ENCODE measurements at regions of chr6 and their contacts with region 1.

Region 1: DNA sequence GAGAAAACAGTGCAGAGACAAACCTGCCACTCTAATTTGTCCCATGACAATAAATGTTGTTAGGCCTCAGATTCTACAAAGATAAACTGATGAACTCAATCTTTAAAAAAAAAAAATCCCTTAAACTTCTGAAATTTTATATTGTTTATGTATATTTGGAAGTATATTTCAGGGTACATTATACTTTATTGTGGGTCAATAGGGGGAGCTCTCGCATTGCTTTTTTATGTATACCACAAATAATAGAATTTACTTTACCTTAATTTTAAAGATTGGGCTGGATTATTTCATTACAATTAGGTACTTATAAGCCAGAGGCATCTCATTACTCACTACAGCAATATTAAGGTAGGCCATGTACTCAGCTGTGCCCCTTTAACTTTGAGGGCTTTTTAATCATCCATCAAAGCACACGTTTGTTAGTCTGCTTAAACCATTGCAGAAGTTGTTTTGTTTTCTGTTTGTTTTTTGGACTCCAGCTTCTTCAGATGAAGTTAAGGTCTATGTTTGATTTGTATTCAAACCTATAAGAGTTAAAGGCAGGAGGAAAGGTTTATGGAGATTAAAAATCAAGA is 56.3 kb upstream of the EYA4 start:
- DNase-seq: no peak
- ATAC-seq: no peak

Region 2: DNA sequence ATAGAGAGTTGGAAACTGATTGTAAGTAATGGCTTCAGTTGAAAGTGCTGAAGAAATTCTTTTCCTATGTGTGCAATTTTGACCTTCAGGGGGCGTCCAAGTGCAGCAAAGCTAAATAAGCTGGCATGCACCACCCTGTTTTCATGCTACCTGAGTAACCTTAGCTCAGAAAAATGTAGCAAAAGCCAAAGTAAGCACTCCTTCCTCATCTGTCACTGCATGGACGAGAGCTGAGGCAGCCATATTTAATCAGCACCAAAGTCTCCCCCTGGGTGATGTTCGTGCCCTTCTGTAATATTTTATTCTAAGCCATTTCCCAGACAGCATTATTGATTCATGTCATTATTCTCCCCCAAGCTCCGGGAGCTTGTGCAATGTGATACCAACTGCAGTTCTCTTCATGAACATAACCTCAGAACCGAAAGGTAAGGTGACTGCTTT is 247.4 kb before region 1 on chr6:
- intact Hi-C with region 1: loop called (anchors 10 kb)
- DNase-seq: no peak
- ATAC-seq: no peak

Region 3: GRCh38 chr6:133314947-133315346 is 130.1 kb after region 1 on chr6:
- intact Hi-C with region 1: no loop called
- DNase-seq: no peak
- ATAC-seq: no peak

Region 4: DNA sequence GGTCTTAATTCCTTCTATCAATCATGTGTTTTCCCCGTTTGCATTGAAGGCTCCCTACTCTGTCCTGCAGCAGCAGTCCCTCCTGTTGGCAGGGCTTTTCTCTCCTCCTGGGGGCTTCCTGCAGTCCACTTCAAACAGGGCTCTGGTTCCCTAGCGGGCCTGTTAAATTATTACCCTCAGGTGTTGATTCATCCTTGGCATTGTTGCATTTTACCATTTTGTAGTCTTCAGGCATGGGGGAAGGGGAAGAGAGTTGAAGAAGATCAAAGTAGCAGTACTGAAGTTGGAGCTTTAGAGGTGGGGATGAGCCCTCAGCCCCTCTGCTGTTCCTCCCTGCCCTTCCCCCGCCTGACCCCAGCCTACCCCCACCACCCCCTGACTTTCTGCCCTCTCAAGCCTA is 225.7 kb after region 1 on chr6:
- intact Hi-C with region 1: no loop called
- DNase-seq: no peak
- ATAC-seq: no peak

Region 5: GRCh38 chr6:133512410-133513016 is 327.6 kb after region 1 on chr6:
- intact Hi-C with region 1: loop called (anchors 1 kb)
- DNase-seq: no peak
- ATAC-seq: no peak

Region 6: GRCh38 chr6:133553652-133554051 is 368.8 kb after region 1 on chr6:
- intact Hi-C with region 1: loop called (anchors 1 kb)
- DNase-seq: no peak
- ATAC-seq: no peak